ENCODE measurements at regions of chr19 and their contacts with region 1.

Region 1: GRCh38 chr19:18251587-18252369 is 22.5 kb downstream of the IQCN start:
- DNase-seq: peak; percentile 88
- ATAC-seq: peak; percentile 74
- H3K4me3 Mint-ChIP-seq: no peak overlapping the region
- H3K27ac Mint-ChIP-seq: no peak overlapping the region
- H3K4me1 Mint-ChIP-seq: no peaks in the 10 kb centered on the region
- H3K27me3 Mint-ChIP-seq: peaks cover 23% of the 10 kb centered on the region

Region 2: GRCh38 chr19:18117692-18118378 is 133.9 kb before region 1 on chr19:
- CTCF ChIA-PET with region 1: interaction called, 11 read pairs
- POLR2A ChIA-PET with region 1: no interaction called
- DNase-seq: peak; percentile 95
- ATAC-seq: peak; percentile 68
- H3K4me3 Mint-ChIP-seq: peak overlapping the region; percentile 82
- H3K27ac Mint-ChIP-seq: peak overlapping the region; percentile 89
- H3K4me1 Mint-ChIP-seq: peaks cover 51% of the 10 kb centered on the region
- H3K27me3 Mint-ChIP-seq: no peaks in the 10 kb centered on the region

Region 3: DNA sequence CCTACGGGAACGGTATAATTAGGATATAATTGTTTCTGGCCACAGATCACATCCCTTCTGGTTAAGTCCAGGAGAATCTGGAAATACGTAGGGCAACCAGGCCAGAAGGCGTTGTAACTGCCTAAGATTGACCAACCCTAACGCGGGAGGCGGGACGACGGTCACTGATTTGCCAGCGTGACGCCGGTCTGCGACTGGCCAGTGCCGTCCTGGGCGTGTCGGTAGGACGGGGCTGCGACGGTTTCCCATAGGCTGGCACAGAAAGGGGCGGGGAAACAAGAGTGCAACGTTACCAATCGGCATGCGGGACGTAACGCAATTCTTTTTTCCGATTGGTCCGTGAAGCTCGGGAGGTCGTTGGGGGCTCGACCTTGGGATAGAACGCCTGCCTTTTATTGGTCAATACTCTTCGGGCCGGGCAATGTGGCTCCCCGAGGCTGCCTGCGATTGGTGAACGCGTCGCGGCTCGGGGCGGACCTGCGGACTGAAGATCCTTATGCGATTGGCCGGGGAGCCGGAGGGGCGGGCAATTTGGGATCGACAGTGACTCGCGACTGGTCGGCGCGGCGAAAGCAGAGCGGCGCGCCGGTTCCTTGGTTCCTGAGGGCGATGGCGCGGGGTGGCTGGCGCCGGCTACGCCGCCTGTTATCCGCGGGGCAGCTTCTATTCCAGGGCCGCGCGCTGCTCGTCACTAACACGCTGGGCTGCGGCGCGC is 58.9 kb before region 1 on chr19 and contains the start of gene MPV17L2:
- CTCF ChIA-PET with region 1: interaction called, 55 read pairs
- POLR2A ChIA-PET with region 1: no interaction called
- DNase-seq: peak; percentile 100
- ATAC-seq: peak; percentile 95
- H3K4me3 Mint-ChIP-seq: peak within 1 kb of the TSS; percentile 90
- H3K27ac Mint-ChIP-seq: peak within 1 kb of the TSS; percentile 93
- H3K4me1 Mint-ChIP-seq: peaks cover 26% of the 10 kb centered on the region
- H3K27me3 Mint-ChIP-seq: no peaks in the 10 kb centered on the region
- total RNA-seq, gene MPV17L2: 9.2 to 10.9 TPM

Region 4: GRCh38 chr19:18203863-18204393 is 47.9 kb before region 1 on chr19 and contains the start of gene RAB3A:
- CTCF ChIA-PET with region 1: interaction called, 135 read pairs
- POLR2A ChIA-PET with region 1: interaction called, 3 read pairs
- DNase-seq: peak; percentile 100
- ATAC-seq: peak; percentile 95
- H3K4me3 Mint-ChIP-seq: peak within 1 kb of the TSS; percentile 95
- H3K27ac Mint-ChIP-seq: peak within 1 kb of the TSS; percentile 91
- H3K4me1 Mint-ChIP-seq: peaks cover 28% of the 10 kb centered on the region
- H3K27me3 Mint-ChIP-seq: peaks cover 3% of the 10 kb centered on the region
- total RNA-seq, gene RAB3A: 5.6 to 6.2 TPM

Region 5: DNA sequence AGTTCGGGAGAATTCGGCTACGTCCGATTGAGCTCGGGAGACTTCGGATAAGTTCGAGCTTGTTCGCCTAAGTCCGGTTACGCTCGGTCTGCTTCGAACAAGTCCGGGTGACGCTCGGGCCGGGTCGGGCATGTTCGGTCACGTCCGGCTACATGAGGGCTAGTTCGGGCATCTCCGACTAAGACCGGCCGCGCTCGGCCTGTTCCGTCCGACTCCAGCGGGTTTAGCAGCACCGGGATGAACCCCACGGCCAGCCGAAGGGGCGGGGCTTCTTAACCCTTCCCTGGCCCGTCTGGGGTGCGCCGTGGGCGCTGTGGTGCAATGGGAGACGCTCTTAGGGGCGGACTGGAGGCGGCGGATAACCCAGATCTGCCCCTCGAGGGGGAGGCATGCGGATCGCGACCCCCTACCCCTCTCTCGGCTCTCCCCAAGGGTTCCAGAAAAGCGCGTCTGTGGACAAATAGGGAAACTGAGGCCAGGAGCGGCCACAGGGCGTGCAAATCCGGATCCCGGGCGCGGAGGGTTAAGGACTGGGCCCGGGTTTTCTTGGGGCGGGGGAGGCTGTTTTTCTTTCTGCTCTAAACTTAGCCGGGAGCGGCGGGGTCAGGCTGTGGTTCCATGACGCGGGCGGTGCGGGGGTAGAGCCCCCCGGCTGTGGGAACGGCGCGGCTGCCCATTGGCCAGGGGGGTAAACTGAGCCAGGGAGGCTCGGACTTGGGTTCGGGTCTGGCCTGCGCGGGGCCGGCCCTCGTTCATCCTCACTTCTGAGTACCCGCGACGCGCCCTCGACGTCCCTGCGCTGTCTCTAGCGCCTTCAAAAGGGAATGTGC is 27.0 kb before region 1 on chr19:
- CTCF ChIA-PET with region 1: interaction called, 10 read pairs
- POLR2A ChIA-PET with region 1: no interaction called
- DNase-seq: peak; percentile 92
- ATAC-seq: peak; percentile 98
- H3K4me3 Mint-ChIP-seq: peak overlapping the region; percentile 77
- H3K27ac Mint-ChIP-seq: peak overlapping the region; percentile 75
- H3K4me1 Mint-ChIP-seq: peaks cover 23% of the 10 kb centered on the region
- H3K27me3 Mint-ChIP-seq: peaks cover 52% of the 10 kb centered on the region

Region 6: DNA sequence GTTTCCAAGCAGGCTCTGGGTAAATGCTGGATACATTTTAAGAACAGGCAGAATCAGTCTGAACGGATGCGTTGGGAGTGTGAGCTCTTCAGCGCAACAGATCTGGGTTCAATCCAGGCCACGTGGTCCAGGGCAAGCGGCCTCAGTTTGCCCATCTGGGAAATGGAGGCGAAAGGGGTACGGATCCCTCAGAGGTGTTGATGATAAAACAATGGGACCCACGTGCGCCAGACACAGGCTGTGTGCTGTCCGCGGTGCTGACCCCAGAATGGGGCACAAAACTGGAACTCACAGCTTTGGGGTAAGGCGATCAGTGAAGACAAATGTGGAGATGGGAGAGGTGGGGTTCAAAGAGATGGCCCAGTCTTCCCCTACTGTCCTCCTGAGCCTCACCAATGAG is 12.5 kb before region 1 on chr19:
- CTCF ChIA-PET with region 1: interaction called, 20 read pairs
- POLR2A ChIA-PET with region 1: no interaction called
- DNase-seq: peak; percentile 45
- ATAC-seq: no peak
- H3K4me3 Mint-ChIP-seq: no peak overlapping the region
- H3K27ac Mint-ChIP-seq: no peak overlapping the region
- H3K4me1 Mint-ChIP-seq: no peaks in the 10 kb centered on the region
- H3K27me3 Mint-ChIP-seq: peaks cover 11% of the 10 kb centered on the region

Region 7: DNA sequence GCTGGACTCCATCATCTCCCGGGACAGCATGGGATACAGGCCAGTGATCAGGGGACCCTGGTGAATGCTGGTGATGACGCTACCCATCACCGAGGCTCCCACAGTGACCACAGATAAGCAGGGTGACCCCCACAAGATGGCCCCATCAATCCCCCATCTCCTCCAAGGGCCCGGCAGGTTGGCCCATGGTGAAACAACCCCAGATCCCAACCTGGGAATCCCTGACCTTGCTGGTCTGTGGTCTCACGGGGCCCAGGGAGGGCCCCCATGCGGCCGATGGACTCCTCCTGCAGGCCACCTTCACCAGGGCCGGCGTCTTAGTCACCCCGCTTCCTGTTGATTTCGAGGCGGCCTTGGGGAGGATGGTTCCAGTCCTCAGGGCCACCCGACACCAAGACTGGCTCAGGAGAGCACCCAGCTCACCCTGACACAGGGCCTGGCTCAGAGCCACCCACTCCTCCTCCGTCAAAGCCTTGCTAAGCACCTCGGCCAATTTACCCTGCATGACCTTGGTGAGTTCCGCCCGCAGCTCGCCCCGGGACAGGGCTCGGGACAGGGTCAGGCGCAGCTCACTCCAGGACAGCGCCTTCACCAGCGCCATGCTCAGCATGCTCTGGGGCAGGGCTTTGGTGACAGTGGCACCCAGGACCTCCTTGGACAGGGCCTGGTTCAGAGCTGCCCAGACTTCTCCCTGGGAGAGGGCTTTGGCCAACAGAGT is 12.5 kb after region 1 on chr19:
- CTCF ChIA-PET with region 1: interaction called, 21 read pairs
- POLR2A ChIA-PET with region 1: no interaction called
- DNase-seq: no peak
- ATAC-seq: no peak
- H3K4me3 Mint-ChIP-seq: no peak overlapping the region
- H3K27ac Mint-ChIP-seq: no peak overlapping the region
- H3K4me1 Mint-ChIP-seq: peaks cover 11% of the 10 kb centered on the region
- H3K27me3 Mint-ChIP-seq: no peaks in the 10 kb centered on the region

Measured in activated CD8-positive, alpha-beta T cell treated with anti-CD3 and anti-CD28 coated beads, Interleukin-2, amount 10 ng/mL, durations not matched to agents 7 days and 5 days (primary cell).